ENCODE measurements at regions of chr15 and their contacts with region 1.

Region 1: DNA sequence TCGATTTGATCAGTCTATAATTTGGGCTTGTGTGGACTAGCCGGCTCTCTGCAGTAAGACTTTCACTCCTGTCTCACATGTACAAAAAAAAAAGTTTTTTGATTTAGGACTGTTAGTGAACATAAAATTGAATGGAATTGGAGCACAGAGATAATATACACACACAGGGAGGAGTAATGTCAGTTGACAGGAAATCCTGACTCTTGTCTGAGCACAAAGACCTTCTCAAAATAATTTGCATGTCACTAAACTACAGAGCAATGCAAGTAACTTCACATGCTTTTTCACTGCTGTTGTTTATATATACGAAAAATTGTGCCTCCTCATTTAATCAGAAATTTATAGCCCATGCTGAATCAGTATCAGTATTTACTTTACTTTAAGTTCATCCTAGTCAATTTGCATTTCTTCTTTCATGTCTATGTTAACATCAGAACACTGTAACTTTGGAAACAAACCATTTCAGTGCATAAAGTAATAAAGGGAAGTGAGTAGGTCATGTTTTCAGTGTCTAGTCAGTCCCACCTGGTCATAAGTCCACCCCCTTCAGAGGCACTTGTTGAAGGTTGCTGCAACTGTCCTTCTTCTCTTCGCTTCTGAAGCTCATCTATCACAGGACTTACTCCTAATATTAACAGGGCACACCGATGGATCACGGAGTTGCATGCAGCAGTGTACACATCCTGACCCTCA is 115.8 kb downstream of the FBXL22 start:
- DNase-seq: no peak

Region 2: DNA sequence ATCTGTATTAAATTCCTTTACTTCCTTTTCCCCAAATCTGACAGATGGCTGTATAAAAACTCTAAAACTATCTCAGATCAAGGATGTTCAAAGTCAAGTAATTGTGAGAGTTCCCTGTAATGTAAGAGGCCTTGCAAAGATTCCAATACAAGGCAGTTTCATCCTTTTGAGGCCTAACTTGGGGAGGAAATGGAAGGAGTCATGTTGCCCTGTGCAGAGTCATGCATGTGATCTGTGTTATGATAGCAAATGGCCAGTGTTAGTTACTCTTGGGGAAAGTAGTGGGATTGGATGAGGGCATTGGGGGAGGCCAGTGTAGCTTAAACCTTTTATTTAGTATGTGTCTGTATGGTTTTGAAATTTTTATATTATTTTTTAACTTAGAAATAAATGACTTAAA is 139.4 kb before region 1 on chr15:
- intact Hi-C with region 1: no loop called
- DNase-seq: no peak

Region 3: GRCh38 chr15:63701365-63701764 is 11.6 kb before region 1 on chr15:
- intact Hi-C with region 1: no loop called
- DNase-seq: no peak

Region 4: GRCh38 chr15:64476550-64476949 is 763.6 kb after region 1 on chr15:
- intact Hi-C with region 1: loop called in 1 of 2 experiments (anchors 2 kb)
- DNase-seq: no peak

Measured in posterior vena cava (tissue), 2 donors.